Activated T-helper 1 cell treated with anti-CD3 and anti-CD28 coated beads, Interleukin-12 subunit alpha, Interleukin-12 subunit beta, Interleukin-2, Interleukin-4 antibody, amounts not matched to agents 30 ng/mL and 10 ng/mL and 1 ng/mL, durations not matched to agents 14 hours and 24 hours and 36 hours (primary cell): ENCODE measurements at regions of chr10 and their contacts with region 1.

Region 1: DNA sequence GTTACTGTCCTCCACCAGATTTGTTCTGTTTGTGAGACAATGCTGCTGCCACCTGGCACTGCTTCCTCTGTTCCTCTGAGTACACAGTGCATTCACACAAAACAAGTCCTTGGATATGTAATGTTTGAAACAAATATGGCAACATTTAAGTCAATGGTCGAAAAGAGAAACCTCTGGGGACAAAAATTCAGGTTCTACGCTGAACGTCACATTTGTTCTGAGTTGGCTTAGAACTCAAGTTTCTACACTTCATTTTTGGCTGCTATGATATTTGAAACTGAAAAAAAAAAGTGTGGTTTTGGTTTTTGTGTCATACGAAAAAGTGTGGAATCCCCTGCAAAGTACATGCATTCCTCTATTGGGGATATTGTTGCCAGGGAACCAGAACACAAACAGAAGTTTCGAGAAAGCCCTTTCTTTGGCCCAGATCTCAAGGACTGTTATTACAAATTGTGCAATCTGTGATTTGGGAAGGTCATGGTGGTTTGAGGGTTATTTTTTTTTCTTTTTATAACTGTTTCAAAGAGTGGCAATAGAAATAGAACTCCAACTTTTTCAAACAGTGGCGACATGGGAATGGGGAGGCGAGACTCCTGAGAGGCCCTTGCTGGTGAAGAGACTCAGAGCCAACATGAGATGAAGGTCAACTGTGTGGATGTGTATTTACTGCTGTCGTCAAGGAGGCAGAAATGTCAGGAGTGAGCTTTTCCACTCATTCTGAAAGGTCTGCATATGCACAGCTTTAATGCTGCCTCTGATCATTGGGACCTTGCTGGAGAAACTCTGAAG is 127.5 kb downstream of the CUBN start:
- DNase-seq: peak; percentile 42
- H3K4me3 Mint-ChIP-seq: peak overlapping the region; percentile 64
- H3K27ac Mint-ChIP-seq: peak overlapping the region; percentile 98
- H3K4me1 Mint-ChIP-seq: peaks cover 43% of the 10 kb centered on the region
- H3K27me3 Mint-ChIP-seq: peaks cover 49% of the 10 kb centered on the region

Region 2: GRCh38 chr10:16653224-16653623 is 348.9 kb before region 1 on chr10:
- intact Hi-C with region 1: no loop called
- DNase-seq: no peak
- H3K4me3 Mint-ChIP-seq: no peak overlapping the region
- H3K27ac Mint-ChIP-seq: no peak overlapping the region
- H3K4me1 Mint-ChIP-seq: peaks cover 12% of the 10 kb centered on the region
- H3K27me3 Mint-ChIP-seq: no peaks in the 10 kb centered on the region

Region 3: DNA sequence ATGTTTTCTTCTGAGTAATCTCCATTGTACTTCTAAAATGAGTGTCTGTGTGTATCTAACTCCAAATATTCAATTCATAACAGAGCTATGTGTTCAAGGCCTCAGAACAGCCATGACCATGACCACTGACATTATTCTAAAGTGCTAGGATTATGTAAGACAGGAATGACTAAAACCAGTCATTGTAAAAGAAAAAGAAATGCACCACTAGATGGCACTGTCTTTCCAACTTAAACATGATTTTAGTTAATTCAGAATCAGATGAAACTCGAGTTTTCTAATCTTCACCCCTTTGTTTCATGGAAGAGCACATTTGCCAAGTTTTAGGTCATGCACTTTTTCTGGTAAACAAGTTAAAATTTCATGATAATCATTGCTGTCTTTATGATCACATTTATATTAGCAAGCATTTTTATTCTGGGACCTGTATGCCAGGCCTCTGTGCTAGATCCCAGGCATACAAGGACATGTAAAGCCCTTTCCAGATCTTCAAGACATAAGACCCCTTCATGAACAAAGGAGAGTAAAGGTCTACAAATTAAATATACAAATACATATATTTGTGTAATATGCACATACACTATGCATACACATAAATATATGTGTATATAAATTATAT is 158.8 kb before region 1 on chr10:
- intact Hi-C with region 1: loop called (anchors 1 kb)
- DNase-seq: no peak
- H3K4me3 Mint-ChIP-seq: no peak overlapping the region
- H3K27ac Mint-ChIP-seq: no peak overlapping the region
- H3K4me1 Mint-ChIP-seq: no peaks in the 10 kb centered on the region
- H3K27me3 Mint-ChIP-seq: peaks cover 2% of the 10 kb centered on the region

Region 4: DNA sequence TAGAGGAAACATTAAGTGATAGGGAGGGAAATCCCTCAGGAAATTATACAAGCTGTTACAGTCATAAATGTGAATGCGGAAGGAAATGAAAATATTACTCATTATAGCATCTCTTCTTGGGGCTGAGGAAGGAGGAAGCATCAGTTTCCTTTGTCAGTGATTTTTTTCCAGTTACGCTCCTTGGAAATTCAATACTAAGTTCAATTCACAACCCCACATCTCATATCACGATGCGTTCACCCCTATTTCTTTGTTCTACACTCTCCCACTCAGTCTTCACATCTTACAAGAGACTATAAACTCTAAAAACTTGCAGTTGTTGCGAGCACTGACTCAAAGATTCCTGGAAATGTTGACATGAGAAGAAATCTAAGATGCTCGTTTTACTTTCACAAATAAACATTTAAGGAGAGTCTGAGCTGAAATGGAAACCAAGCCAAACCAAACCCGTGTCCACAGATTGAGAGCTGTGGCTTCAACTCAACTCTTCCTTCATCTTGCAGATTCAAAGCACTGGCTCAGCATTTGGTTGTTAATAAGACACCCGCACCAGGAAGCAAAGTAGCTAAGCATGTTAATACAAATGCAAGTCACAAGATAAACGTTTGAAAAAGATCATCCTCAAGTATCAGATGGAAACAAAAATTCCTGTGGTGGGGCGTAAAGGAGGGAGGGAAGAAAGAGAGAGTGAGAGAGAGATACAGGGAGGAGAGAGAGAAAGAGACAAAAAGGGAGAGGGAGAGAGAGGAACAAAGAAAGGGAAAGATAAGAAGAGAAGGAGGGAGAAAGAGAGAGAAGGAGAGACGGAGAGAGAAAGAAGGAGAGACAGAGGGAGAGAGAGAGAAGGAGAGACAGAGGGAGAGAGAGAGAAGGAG is 34.9 kb before region 1 on chr10:
- intact Hi-C with region 1: loop called (anchors 1 kb)
- DNase-seq: no peak
- H3K4me3 Mint-ChIP-seq: peak overlapping the region; percentile 2
- H3K27ac Mint-ChIP-seq: peak overlapping the region; percentile 34
- H3K4me1 Mint-ChIP-seq: peaks cover 24% of the 10 kb centered on the region
- H3K27me3 Mint-ChIP-seq: peaks cover 22% of the 10 kb centered on the region

Region 5: GRCh38 chr10:17144757-17145156 is 142.6 kb after region 1 on chr10:
- intact Hi-C with region 1: loop called (anchors 1 kb)
- DNase-seq: peak; percentile 31
- H3K4me3 Mint-ChIP-seq: no peak overlapping the region
- H3K27ac Mint-ChIP-seq: peak overlapping the region; percentile 45
- H3K4me1 Mint-ChIP-seq: peaks cover 19% of the 10 kb centered on the region
- H3K27me3 Mint-ChIP-seq: no peaks in the 10 kb centered on the region

Region 6: GRCh38 chr10:17216217-17216900 is 214.2 kb after region 1 on chr10:
- intact Hi-C with region 1: loop called (anchors 1 kb)
- DNase-seq: peak; percentile 34
- H3K4me3 Mint-ChIP-seq: peak overlapping the region; percentile 45
- H3K27ac Mint-ChIP-seq: peak overlapping the region; percentile 98
- H3K4me1 Mint-ChIP-seq: peaks cover 51% of the 10 kb centered on the region
- H3K27me3 Mint-ChIP-seq: no peaks in the 10 kb centered on the region